Left ventricle myocardium superior (tissue), 1 donor: ENCODE measurements at regions of chr1 and their contacts with region 1.

Region 1: DNA sequence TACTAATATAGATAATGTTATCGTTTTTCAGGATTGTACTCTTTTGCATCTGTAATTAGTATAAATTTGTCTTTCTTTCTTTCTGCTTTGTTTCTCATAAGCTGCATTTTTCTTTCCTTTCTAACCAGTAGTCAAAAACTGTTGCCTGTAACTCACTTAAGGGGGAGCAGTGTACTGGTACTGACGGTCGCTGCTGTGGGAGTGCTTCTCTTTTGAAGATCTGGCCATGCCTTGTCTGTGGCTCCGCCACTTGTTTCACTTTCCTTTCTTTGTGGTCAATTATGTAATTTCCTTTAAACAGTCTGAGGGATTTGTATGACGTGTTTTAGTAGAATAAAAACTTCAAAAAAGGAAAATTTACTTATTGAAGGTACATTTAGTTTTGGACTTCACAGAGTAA is 37.0 kb downstream of the MIA3 start:
- DNase-seq: no peak
- ATAC-seq: peak; percentile 45

Region 2: GRCh38 chr1:222539951-222540597 is 114.8 kb before region 1 on chr1:
- intact Hi-C with region 1: no loop called
- DNase-seq: no peak
- ATAC-seq: no peak

Region 3: DNA sequence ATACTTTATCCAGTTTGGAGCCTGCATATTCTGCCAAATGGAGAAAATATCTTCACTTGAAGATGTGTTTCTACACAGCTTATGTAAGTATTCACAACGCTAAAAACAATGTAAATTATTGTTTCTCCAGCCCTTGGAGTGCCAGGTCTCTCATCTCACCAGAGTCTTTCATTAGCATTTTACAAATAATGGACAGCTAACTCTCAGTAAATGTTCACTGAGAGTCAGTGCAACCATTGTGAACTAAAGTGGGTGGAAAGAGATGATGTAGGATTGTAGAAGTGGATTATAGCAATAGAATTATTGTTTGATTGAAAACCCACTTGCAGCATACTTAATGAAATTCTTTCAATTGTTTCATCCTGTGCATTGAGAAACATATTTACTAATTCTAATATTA is 73.9 kb after region 1 on chr1:
- intact Hi-C with region 1: loop called (anchors 10 kb)
- DNase-seq: no peak
- ATAC-seq: no peak

Region 4: GRCh38 chr1:223022641-223023473 is 368.0 kb after region 1 on chr1:
- intact Hi-C with region 1: no loop called
- DNase-seq: no peak
- ATAC-seq: peak; percentile 91